ENCODE measurements at regions of chr2 and their contacts with region 1.

Region 1: GRCh38 chr2:70871398-70872211 is 36.0 kb upstream of the CD207 start:
- DNase-seq: peak; percentile 58 to 66 (median 63)
- H3K4me3 ChIP-seq: peak overlapping the region in 1 of 2 donors; percentile 8
- H3K4me3 Mint-ChIP-seq: peak overlapping the region in 5 of 8 donors; percentile 13 to 54 (median 30)
- H3K27ac ChIP-seq: no peak overlapping the region
- H3K27ac Mint-ChIP-seq: no peak overlapping the region
- H3K4me1 ChIP-seq: peaks cover 9% of the 10 kb centered on the region
- H3K4me1 Mint-ChIP-seq: peaks cover 0 to 6% (median 3%) of the 10 kb centered on the region in 4 donors
- H3K27me3 ChIP-seq: peaks cover 6% of the 10 kb centered on the region
- H3K27me3 Mint-ChIP-seq: peaks cover 28 to 37% of the 10 kb centered on the region in 2 donors

Region 2: DNA sequence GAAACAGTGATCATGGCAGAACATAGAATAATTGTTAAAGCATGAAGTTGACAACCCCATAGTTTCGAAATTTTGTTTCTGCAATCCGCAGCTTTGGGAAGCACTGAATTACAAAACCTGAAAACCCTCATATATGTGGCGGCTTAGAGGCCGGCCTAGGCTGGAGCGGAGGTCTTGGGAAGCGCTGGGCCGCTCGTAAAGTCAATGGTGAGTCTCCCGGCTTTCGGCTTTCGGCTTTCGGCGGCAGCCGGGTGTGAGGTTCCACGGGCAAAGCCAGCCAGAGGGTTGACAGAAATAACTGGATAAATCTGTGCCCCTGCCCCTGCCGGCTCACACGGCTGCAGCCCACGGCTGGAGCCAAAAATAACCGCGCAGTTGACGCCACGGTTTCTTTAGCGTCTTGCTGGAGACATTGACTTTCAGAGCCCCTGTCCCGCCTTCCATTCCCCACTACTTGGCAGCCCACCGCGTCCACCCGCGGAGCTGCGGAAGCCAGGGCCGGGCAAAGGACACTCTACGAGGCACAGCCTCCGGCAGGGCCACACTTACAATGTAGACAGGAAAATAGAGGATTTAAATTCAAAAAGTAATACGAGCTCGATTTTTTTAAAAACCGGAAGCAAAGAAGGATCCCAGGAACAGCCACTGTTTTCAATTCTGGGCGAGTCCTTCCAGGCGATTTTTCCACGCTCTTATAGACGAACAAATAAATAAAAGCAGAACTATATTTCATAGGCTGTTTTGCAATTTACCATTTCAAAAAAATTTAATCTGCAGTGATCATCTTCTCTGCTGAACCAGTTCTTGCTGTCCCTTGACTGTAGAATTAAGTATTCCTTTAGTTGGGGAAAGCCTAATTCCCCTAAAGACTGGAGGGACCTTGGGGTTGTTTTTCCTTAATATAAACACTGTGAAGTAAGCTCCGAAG is 35.8 kb after region 1 on chr2:
- CTCF ChIA-PET with region 1: interaction called, 11 read pairs
- POLR2A ChIA-PET with region 1: no interaction called
- intact Hi-C with region 1: no loop called
- DNase-seq: no peak
- H3K4me3 ChIP-seq: no peak overlapping the region
- H3K4me3 Mint-ChIP-seq: peak overlapping the region in 7 of 8 donors; percentile 42 to 81 (median 75)
- H3K27ac ChIP-seq: no peak overlapping the region
- H3K27ac Mint-ChIP-seq: no peak overlapping the region
- H3K4me1 ChIP-seq: peaks cover 11% of the 10 kb centered on the region
- H3K4me1 Mint-ChIP-seq: peaks cover 1 to 22% (median 11%) of the 10 kb centered on the region in 4 donors
- H3K27me3 ChIP-seq: peaks cover 31% of the 10 kb centered on the region
- H3K27me3 Mint-ChIP-seq: peaks cover 41 to 54% of the 10 kb centered on the region in 2 donors

Region 3: DNA sequence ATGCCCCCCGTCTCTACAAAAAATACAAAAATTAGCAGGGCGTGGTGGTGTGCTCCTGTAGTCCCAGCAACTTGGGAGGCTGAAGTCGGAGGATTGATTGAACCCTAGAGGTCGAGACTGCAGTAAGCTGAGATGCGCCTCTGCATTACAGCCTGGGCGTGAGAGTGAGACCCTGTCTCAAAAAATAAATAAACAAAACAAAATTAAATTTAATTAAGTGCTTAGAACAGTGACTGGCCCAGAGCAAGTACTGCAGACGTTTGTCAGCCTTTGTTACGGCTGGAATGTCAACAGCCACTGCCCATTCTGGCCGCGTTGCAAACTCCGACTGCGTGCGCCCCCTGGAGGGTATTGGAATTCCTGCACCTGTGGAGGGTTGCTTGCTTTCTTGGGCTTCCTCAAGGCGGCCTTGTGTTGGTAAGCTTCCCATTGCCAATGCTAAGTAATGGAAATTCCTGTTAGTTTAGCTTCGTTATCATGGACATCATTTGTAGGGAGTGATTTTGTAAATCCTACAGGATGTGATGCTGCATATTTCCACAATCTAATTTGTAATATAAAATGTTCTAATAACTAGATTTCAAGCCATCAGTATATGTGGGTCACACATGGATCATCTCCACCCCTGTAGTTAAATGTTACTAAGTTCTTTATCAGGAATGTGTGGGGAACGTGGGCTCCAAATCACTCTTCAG is 48.2 kb after region 1 on chr2:
- CTCF ChIA-PET with region 1: interaction called, 42 read pairs
- POLR2A ChIA-PET with region 1: no interaction called
- intact Hi-C with region 1: loop called (anchors 1 kb)
- DNase-seq: peak in 4 of 5 donors; percentile 40 to 54 (median 52)
- H3K4me3 ChIP-seq: no peak overlapping the region
- H3K4me3 Mint-ChIP-seq: no peak overlapping the region
- H3K27ac ChIP-seq: no peak overlapping the region
- H3K27ac Mint-ChIP-seq: no peak overlapping the region
- H3K4me1 ChIP-seq: no peaks in the 10 kb centered on the region
- H3K4me1 Mint-ChIP-seq: no peaks in the 10 kb centered on the region
- H3K27me3 ChIP-seq: no peaks in the 10 kb centered on the region
- H3K27me3 Mint-ChIP-seq: peaks cover 15 to 22% of the 10 kb centered on the region in 2 donors

Region 4: GRCh38 chr2:71120213-71120612 is 248.6 kb after region 1 on chr2:
- CTCF ChIA-PET with region 1: no interaction called
- POLR2A ChIA-PET with region 1: no interaction called
- intact Hi-C with region 1: no loop called
- DNase-seq: no peak
- H3K4me3 ChIP-seq: no peak overlapping the region
- H3K4me3 Mint-ChIP-seq: peak overlapping the region in 1 of 8 donors; percentile 5
- H3K27ac ChIP-seq: no peak overlapping the region
- H3K27ac Mint-ChIP-seq: no peak overlapping the region
- H3K4me1 ChIP-seq: no peaks in the 10 kb centered on the region
- H3K4me1 Mint-ChIP-seq: peaks cover 0 to 4% (median under 1%) of the 10 kb centered on the region in 4 donors
- H3K27me3 ChIP-seq: no peaks in the 10 kb centered on the region
- H3K27me3 Mint-ChIP-seq: no peaks in the 10 kb centered on the region